HepG2 (cell line): ENCODE measurements at regions of chr16 and their contacts with region 1.

Region 1: GRCh38 chr16:30429678-30430427 is at the start of gene DCTPP1:
- DNase-seq: peak; percentile 100
- ATAC-seq: peak; percentile 98
- H3K4me3 ChIP-seq: peak within 1 kb of the TSS; percentile 62 to 84 (median 78)
- H3K27ac ChIP-seq: peak within 1 kb of the TSS; percentile 55
- H3K4me1 ChIP-seq: peaks cover 56% of the 10 kb centered on the region
- H3K27me3 ChIP-seq: peaks cover 0 to 3% of the 10 kb centered on the region in 2 experiments; a peak in 2 of 5 replicates
- CTCF ChIP-seq: peak; percentile 93
- EP300 ChIP-seq: peak in 1 of 2 experiments; percentile 42; a peak in 2 of 4 replicates
- POLR2A ChIP-seq: peak; percentile 26 to 78; a peak in 3 of 4 replicates
- RAD21 ChIP-seq: peak; percentile 98
- total RNA-seq, gene DCTPP1: 74.4 and 105 TPM in 2 replicates

Region 2: DNA sequence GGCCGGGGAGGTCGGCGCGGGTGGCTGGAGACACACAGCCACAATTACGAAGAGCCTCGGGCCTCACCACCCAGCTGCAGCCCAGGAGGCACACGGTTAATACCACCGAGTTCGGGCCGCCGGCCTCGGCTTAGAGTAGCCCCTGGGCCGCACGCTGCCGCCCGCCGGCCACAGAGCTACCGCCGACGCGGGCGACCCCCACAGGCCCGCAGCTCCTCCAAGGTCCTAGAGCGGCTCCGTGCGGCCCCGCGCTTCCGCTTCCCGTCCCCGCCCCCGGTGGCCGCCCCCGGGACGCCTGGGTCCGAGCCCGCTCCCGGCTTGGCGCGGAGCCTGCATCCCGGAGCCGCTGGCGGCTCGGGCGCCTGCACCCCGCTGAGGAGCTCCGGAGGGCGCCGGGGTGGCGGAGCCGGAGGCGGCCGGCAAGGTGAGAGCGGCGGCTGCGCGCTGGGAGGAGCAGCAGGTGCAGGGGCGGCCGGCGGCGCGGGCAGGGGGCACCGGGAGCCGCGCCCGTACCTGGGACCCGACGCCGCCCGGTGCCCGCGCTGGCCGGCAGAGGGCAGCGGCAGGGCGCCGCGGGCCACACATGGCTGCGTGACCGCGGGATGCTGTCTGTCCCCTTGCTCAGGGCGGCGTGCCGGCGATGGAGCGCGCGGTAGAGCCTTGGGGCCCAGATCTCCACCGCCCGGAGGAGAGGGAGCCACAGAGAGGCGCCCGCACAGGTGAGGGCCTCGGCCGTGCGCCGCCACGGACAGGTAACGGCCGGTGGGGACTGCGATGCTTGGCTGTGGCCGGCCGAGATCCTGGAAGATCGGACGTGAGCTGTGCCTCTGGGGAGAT is 34.5 kb before region 1 on chr16 and contains the start of gene ZNF48:
- CTCF ChIA-PET with region 1: interaction called, 3 read pairs
- POLR2A ChIA-PET with region 1: interaction called, 11 read pairs
- in situ Hi-C with region 1: no loop called
- intact Hi-C with region 1: no loop called
- DNase-seq: peak; percentile 89
- ATAC-seq: peak; percentile 94
- H3K4me3 ChIP-seq: peak within 1 kb of the TSS; percentile 75 to 93 (median 75)
- H3K27ac ChIP-seq: peak within 1 kb of the TSS; percentile 73
- H3K4me1 ChIP-seq: peaks cover 36% of the 10 kb centered on the region
- H3K27me3 ChIP-seq: no peaks in the 10 kb centered on the region
- CTCF ChIP-seq: peak; percentile 78
- EP300 ChIP-seq: 0 out of 4 replicates have a peak, but pooled peaks of 1 of the 2 experiments have one; percentile 19
- POLR2A ChIP-seq: peak in 1 of 2 experiments; percentile 70; a peak in 3 of 4 replicates
- RAD21 ChIP-seq: peak; percentile 92
- total RNA-seq, gene ZNF48: 10.9 and 12.3 TPM in 2 replicates

Region 3: DNA sequence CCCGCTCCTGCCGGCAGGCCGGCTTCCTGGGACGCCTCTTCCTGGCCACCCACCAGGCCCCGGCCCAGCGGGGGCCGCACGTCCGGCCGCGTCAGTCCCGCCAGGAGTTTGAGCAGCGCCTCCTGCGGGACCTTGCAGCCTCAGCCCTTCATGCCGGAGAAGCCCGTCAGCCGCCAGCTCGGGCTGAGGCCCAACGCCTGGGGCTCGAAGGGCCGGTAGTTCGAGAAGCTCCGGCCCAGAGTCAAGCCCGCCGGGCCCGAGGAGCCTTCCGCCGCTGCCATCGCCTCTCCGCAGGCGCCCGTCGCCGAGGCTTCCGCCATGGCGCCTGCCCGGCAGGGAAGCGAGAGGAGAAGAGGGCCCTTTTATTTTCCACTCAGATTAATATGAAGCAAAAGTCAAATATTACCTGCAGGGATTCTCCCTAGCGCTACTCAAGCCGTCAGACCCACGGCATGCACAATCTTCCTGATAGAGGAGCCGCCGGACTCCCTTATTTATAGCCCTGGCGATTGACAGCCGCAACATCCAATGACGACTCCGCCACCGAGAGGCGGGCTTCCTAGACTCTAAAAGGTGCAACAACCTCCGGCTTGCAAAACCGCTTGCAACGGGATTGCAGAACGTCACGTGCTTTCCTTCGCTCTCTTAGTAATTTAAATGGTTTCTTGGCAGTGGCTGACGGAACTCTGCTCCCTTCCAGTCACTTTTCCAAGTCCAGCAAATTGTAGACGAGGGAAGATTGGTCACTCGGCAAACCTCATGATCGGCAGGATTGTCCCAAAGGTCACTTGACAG is 15.8 kb after region 1 on chr16 and contains the start of gene SEPHS2:
- CTCF ChIA-PET with region 1: interaction called, 4 read pairs
- POLR2A ChIA-PET with region 1: interaction called, 29 read pairs
- in situ Hi-C with region 1: no loop called
- intact Hi-C with region 1: no loop called
- DNase-seq: peak; percentile 97
- ATAC-seq: peak; percentile 52
- H3K4me3 ChIP-seq: peak within 1 kb of the TSS; percentile 86 to 92 (median 91)
- H3K27ac ChIP-seq: peak within 1 kb of the TSS; percentile 95
- H3K4me1 ChIP-seq: peaks cover 94% of the 10 kb centered on the region
- H3K27me3 ChIP-seq: no peaks in the 10 kb centered on the region; a peak in 1 of 5 replicates
- CTCF ChIP-seq: peak; percentile 55
- EP300 ChIP-seq: peak in 1 of 2 experiments; percentile 41; a peak in 1 of 4 replicates
- POLR2A ChIP-seq: peak; percentile 92 to 100
- RAD21 ChIP-seq: peak; percentile 46
- total RNA-seq, gene SEPHS2: 20.7 and 56.3 TPM in 2 replicates

Region 4: GRCh38 chr16:30470170-30470512 is 40.3 kb after region 1 on chr16:
- CTCF ChIA-PET with region 1: no interaction called
- POLR2A ChIA-PET with region 1: no interaction called
- in situ Hi-C with region 1: no loop called
- intact Hi-C with region 1: no loop called
- DNase-seq: no peak
- ATAC-seq: no peak
- H3K4me3 ChIP-seq: no peak overlapping the region
- H3K27ac ChIP-seq: no peak overlapping the region
- H3K4me1 ChIP-seq: peaks cover 43% of the 10 kb centered on the region
- H3K27me3 ChIP-seq: peaks cover 2 to 16% of the 10 kb centered on the region in 2 experiments; a peak in 2 of 5 replicates
- CTCF ChIP-seq: no peak
- EP300 ChIP-seq: no peak
- POLR2A ChIP-seq: no peak
- RAD21 ChIP-seq: no peak

Region 5: GRCh38 chr16:30534368-30535105 is 104.7 kb after region 1 on chr16 and contains the start of gene ZNF747:
- CTCF ChIA-PET with region 1: interaction called, 7 read pairs
- POLR2A ChIA-PET with region 1: interaction called, 50 read pairs
- in situ Hi-C with region 1: no loop called
- intact Hi-C with region 1: loop called (anchors 1 kb)
- DNase-seq: peak; percentile 92
- ATAC-seq: peak; percentile 84
- H3K4me3 ChIP-seq: peak within 1 kb of the TSS; percentile 75 to 93 (median 81)
- H3K27ac ChIP-seq: peak within 1 kb of the TSS; percentile 85
- H3K4me1 ChIP-seq: peaks cover 68% of the 10 kb centered on the region
- H3K27me3 ChIP-seq: no peaks in the 10 kb centered on the region; a peak in 1 of 5 replicates
- CTCF ChIP-seq: peak; percentile 47
- EP300 ChIP-seq: peak; percentile 22 to 47; a peak in 2 of 4 replicates
- POLR2A ChIP-seq: peak; percentile 72 to 87
- RAD21 ChIP-seq: no peak; the same call in none of the 2 replicates
- total RNA-seq, gene ZNF747: 8.8 and 10.2 TPM in 2 replicates

Region 6: DNA sequence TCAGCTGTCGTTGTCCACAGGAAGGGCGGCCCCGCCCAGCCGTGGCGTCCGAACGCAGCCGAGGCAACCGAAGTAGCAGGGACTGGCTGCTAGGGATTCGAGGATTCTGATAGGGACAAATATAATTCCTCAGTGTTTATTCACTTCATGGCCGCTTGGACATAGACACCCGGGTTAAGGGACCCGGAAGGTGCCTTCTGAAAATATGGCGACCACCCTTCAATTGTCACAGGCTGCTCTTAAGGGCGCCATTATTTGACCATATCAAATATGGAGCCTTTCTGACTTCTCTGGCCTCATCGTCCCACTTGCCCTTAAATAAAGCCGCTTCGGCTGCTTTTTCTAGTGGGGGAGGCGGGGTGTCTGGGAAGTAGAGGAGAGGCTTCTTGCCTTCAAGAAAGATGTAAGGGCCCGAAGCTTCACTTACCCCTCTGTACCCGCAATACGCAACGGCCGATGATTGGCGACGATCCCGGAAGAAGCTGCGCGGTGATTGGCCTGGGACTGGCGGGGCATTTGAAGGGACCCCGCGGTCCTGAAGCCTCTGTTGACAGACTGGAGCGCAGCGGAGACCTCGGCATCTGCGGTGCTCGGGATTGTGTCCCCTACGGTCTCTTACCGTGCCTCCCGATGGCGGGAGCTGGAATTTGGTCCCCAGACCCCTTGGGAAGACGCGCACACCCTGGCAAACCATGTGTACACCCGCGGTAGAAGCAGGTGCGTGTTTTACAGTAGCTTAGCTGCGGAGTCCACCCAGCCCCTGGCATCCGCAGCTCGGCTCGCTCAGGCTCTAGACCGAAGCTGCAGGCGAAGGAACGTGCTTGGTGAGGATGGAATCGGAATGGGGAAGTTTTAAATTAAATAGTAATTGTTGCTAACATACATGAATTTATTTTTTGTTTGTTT is 142.1 kb after region 1 on chr16 and contains the start of gene ZNF688:
- CTCF ChIA-PET with region 1: no interaction called
- POLR2A ChIA-PET with region 1: interaction called, 17 read pairs
- in situ Hi-C with region 1: no loop called
- intact Hi-C with region 1: no loop called
- DNase-seq: peak; percentile 93
- ATAC-seq: peak; percentile 89
- H3K4me3 ChIP-seq: peak within 1 kb of the TSS; percentile 89 to 97 (median 93)
- H3K27ac ChIP-seq: peak within 1 kb of the TSS; percentile 89
- H3K4me1 ChIP-seq: peaks cover 71% of the 10 kb centered on the region
- H3K27me3 ChIP-seq: no peaks in the 10 kb centered on the region
- CTCF ChIP-seq: no peak
- EP300 ChIP-seq: no peak
- POLR2A ChIP-seq: peak; percentile 52 to 74
- RAD21 ChIP-seq: no peak; the same call in 1 of the 2 replicates
- total RNA-seq, gene ZNF688: 5.4 and 5.8 TPM in 2 replicates

Region 7: DNA sequence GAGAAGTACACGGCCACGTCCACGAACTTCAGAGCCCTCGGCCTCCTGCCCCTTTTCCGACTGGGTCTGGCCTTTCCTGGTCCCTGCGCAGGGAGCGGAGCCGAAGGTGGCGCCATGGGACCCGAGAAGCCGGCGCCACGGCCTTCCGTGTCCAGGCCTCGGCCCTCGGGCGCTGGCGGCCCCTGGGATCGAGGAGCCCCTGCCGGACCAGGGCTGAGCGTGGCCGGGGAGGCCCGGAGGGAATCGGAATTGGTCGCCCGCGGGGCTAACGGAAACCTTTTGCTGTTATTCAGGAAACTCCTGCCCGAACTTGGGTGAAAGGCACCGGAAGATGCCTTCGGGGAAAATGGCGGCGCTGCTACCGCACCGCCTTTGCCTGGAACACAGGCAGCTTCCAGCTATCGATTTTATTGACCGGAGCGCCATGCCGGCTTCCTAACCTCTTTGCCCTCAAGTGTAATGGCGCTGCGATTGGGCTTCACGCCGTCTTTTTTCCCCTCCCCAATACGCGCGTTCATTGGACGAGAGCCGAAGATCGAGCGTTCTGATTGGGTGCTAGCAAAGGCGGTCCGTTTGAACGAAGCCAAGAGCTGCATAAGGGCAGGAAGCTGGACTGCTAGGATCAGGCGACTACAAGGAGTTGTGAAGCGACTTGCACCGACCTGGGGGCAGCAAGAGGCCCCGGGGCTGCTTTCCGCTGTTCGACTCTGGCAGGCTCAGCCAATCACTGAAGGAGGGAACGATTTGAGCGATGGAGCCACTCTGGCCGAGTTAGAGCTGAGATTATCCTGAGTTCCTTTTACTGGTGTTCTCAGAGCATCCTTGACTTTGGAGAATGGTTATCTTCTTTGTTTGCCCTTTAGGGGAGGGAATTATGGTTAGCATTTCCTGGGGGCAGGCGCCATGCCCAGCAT is 180.3 kb after region 1 on chr16 and contains the start of gene ZNF689:
- CTCF ChIA-PET with region 1: interaction called, 6 read pairs
- POLR2A ChIA-PET with region 1: interaction called, 12 read pairs
- in situ Hi-C with region 1: loop called (anchors 10 kb)
- intact Hi-C with region 1: no loop called
- DNase-seq: peak; percentile 98
- ATAC-seq: peak; percentile 92
- H3K4me3 ChIP-seq: peak within 1 kb of the TSS; percentile 80 to 96 (median 92)
- H3K27ac ChIP-seq: peak within 1 kb of the TSS; percentile 92
- H3K4me1 ChIP-seq: peaks cover 37% of the 10 kb centered on the region
- H3K27me3 ChIP-seq: no peaks in the 10 kb centered on the region; a peak in 1 of 5 replicates
- CTCF ChIP-seq: peak; percentile 21; the same call in 1 of the 2 replicates
- EP300 ChIP-seq: peak; percentile 26 to 33; a peak in 1 of 4 replicates
- POLR2A ChIP-seq: peak; percentile 84 to 96
- RAD21 ChIP-seq: no peak; the same call in 1 of the 2 replicates
- total RNA-seq, gene ZNF689: 19.5 and 22.7 TPM in 2 replicates

Region 8: GRCh38 chr16:30657866-30658730 is 228.2 kb after region 1 on chr16 and contains the start of gene FBRS:
- CTCF ChIA-PET with region 1: no interaction called
- POLR2A ChIA-PET with region 1: interaction called, 11 read pairs
- in situ Hi-C with region 1: no loop called
- intact Hi-C with region 1: no loop called
- DNase-seq: peak; percentile 100
- ATAC-seq: peak; percentile 85
- H3K4me3 ChIP-seq: peak within 1 kb of the TSS; percentile 78 to 89 (median 82)
- H3K27ac ChIP-seq: peak within 1 kb of the TSS; percentile 93
- H3K4me1 ChIP-seq: peaks cover 36% of the 10 kb centered on the region
- H3K27me3 ChIP-seq: no peaks in the 10 kb centered on the region; a peak in 1 of 5 replicates
- CTCF ChIP-seq: peak; percentile 97
- EP300 ChIP-seq: peak in 1 of 2 experiments; percentile 22; a peak in 2 of 4 replicates
- POLR2A ChIP-seq: peak; percentile 76 to 86
- RAD21 ChIP-seq: peak; percentile 97
- total RNA-seq, gene FBRS: 10.1 and 16.2 TPM in 2 replicates

Region 9: DNA sequence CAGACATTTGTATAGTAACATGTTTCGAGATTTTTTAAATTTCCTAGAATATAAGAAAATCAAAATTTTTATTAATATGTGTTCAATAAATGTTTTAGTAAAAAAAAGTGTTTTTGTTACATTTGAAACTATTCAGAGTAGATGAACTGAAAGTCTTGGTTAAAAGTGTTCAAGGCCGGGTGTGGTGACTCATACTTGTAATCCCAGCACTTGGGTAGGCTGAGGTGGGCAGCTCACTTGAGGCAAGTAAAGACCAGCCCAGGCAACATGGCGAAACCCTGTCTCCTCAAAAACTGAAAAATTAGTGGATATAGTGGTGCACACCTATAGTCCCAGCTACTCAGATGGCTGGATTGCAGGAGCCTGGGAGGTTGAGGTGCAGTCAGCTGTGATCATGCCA is 301.6 kb after region 1 on chr16:
- CTCF ChIA-PET with region 1: no interaction called
- POLR2A ChIA-PET with region 1: no interaction called
- in situ Hi-C with region 1: no loop called
- intact Hi-C with region 1: no loop called
- DNase-seq: no peak
- ATAC-seq: no peak
- H3K4me3 ChIP-seq: no peak overlapping the region
- H3K27ac ChIP-seq: no peak overlapping the region
- H3K4me1 ChIP-seq: no peaks in the 10 kb centered on the region
- H3K27me3 ChIP-seq: no peaks in the 10 kb centered on the region
- CTCF ChIP-seq: no peak
- EP300 ChIP-seq: no peak
- POLR2A ChIP-seq: 0 out of 4 replicates have a peak, but pooled peaks of 1 of the 2 experiments have one; percentile 12
- RAD21 ChIP-seq: no peak